IMR-90 (cell line): ENCODE measurements at regions of chr6 and their contacts with region 1.

Region 1: DNA sequence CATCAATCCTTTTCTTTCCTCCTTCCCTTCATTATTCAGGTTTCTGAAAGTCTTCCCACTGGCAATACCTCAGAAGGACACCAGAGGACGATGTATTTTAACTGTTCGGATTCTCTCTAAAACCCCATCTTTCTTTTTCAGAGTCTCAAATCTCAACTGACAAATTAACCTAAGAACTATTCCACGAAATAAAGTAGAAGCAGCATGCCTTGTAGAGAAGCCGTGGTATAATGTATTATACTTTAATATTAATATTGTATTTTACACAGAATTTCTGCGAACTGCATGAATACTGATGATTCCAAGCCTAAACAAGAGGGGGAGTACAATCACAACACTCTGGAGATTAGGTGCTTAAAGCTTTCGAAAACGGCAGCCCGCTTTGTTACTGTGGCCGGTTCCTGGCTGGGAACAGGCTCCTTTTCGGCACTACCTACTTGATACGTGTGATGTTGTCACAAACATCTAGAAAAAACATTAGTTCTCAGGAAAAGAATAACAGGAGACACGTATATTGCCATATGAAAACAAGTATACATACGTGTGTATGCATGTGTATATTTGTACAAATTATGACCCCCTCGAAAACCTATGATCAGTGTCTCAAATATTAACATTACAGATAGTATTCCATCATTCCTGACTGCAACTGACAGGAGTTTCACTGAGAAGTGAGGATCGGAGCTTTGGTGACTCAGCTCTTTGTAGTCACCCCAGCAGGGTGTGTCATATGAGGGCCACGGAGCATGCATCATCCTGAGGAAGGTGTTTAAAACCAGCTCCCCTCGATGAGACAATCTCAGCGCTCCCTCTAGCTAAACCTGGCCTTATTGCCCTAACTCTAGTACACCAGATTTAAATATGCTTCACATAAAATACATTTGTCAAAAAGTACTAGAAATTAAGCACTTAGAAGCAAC is 319.7 kb upstream of the TCF21 start:
- DNase-seq: peak; percentile 91
- ATAC-seq: peak; percentile 81
- H3K4me3 ChIP-seq: peak overlapping the region; percentile 29; the same call in 1 of the 2 replicates
- H3K27ac ChIP-seq: peak overlapping the region; percentile 96
- H3K4me1 ChIP-seq: peaks cover 16% of the 10 kb centered on the region
- H3K27me3 ChIP-seq: no peaks in the 10 kb centered on the region
- CTCF ChIP-seq: peak; percentile 97
- POLR2A ChIP-seq: peak; percentile 50; the same call in 1 of the 2 replicates
- RAD21 ChIP-seq: peak; percentile 96

Region 2: GRCh38 chr6:133544419-133544818 is 24.8 kb before region 1 on chr6:
- CTCF ChIA-PET with region 1: no interaction called
- POLR2A ChIA-PET with region 1: no interaction called
- dilution Hi-C with region 1: no loop called
- in situ Hi-C with region 1: no loop called
- intact Hi-C with region 1: no loop called
- DNase-seq: no peak
- ATAC-seq: no peak
- H3K4me3 ChIP-seq: no peak overlapping the region
- H3K27ac ChIP-seq: peak overlapping the region; percentile 21; the same call in 1 of the 2 replicates
- H3K4me1 ChIP-seq: peaks cover 16% of the 10 kb centered on the region
- H3K27me3 ChIP-seq: no peaks in the 10 kb centered on the region
- CTCF ChIP-seq: no peak
- POLR2A ChIP-seq: no peak
- RAD21 ChIP-seq: no peak

Region 3: DNA sequence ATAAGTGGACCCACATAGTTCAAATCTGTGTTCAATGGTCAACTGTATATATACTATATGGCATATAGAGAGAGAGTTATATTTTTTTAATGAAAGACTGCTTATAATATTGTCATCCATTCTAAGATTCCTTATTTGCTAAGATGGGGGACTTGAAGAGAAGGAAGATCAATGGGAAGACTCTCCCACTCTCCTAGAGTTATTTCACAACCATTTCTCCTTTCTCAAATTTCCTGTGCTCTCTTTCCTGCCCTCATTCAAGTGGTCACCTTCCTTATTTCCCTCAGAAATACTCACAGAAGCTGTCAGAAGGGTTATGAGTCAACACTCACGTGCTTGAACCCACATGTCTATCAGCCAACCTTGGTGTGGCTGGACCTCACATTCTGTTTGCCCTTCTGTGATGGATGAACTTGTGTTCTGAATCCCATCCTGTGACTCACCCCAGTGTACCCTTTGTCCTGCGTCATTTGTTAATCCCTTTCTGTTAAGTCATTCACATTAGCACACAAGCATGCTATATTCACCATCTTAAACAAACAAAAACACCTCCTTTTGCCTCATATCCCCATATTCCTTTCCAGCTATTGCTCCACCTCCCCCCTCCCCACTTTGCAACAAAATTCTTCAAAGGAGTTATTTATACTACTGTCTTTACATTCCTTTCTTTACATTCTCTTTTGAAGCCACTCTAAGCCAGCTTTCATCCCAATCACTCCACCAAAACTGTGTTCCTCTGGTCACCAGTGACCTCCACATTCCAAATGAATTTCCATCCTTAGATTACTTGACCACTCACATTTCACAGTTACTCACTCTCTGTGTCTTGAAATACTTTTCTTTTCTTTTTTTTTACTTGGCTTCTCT is 40.4 kb after region 1 on chr6:
- CTCF ChIA-PET with region 1: interaction called, 3 read pairs
- POLR2A ChIA-PET with region 1: no interaction called
- dilution Hi-C with region 1: no loop called
- in situ Hi-C with region 1: no loop called
- intact Hi-C with region 1: loop called (anchors 1 kb)
- DNase-seq: peak; percentile 100
- ATAC-seq: peak; percentile 81
- H3K4me3 ChIP-seq: no peak overlapping the region
- H3K27ac ChIP-seq: peak overlapping the region; percentile 98; the same call in 1 of the 2 replicates
- H3K4me1 ChIP-seq: peaks cover 30% of the 10 kb centered on the region
- H3K27me3 ChIP-seq: no peaks in the 10 kb centered on the region
- CTCF ChIP-seq: no peak
- POLR2A ChIP-seq: peak; percentile 51; the same call in 1 of the 2 replicates
- RAD21 ChIP-seq: peak; percentile 6

Region 4: GRCh38 chr6:133644892-133645619 is 75.8 kb after region 1 on chr6:
- CTCF ChIA-PET with region 1: interaction called, 17 read pairs
- POLR2A ChIA-PET with region 1: no interaction called
- dilution Hi-C with region 1: no loop called
- in situ Hi-C with region 1: no loop called
- intact Hi-C with region 1: no loop called
- DNase-seq: peak; percentile 74
- ATAC-seq: peak; percentile 75
- H3K4me3 ChIP-seq: no peak overlapping the region
- H3K27ac ChIP-seq: peak overlapping the region; percentile 90
- H3K4me1 ChIP-seq: peaks cover 16% of the 10 kb centered on the region
- H3K27me3 ChIP-seq: no peaks in the 10 kb centered on the region
- CTCF ChIP-seq: no peak
- POLR2A ChIP-seq: no peak
- RAD21 ChIP-seq: no peak

Region 5: GRCh38 chr6:133837801-133838349 is 268.6 kb after region 1 on chr6:
- CTCF ChIA-PET with region 1: interaction called, 7 read pairs
- POLR2A ChIA-PET with region 1: no interaction called
- dilution Hi-C with region 1: no loop called
- in situ Hi-C with region 1: no loop called
- intact Hi-C with region 1: loop called (anchors 1 kb)
- DNase-seq: no peak
- ATAC-seq: no peak
- H3K4me3 ChIP-seq: no peak overlapping the region
- H3K27ac ChIP-seq: no peak overlapping the region
- H3K4me1 ChIP-seq: peaks cover 8% of the 10 kb centered on the region
- H3K27me3 ChIP-seq: no peaks in the 10 kb centered on the region
- CTCF ChIP-seq: peak; percentile 30; the same call in 1 of the 2 replicates
- POLR2A ChIP-seq: no peak
- RAD21 ChIP-seq: peak; percentile 30

Region 6: DNA sequence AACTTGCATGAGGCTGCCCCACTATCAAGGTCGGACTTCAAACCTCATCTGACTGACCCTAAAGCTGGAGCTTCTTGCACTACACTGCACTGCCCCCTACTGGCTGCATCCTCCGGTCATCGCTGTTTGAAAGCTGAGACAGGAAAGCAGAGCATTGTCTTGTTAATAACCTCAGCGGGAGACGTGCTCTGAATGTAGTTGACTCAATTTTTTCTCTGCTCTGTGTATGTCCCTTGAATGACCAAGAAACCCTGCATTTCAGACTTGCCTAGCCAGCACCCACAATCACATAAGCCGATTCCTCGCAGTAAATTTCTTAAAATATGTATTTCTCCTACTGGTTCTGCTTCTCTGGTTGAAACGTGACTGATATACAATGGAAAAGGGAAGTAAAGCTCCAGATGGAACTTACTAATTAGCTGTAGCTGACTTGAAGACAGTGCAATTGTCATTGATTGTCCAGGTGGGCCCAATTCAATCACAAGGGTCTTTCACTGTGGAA is 347.5 kb after region 1 on chr6:
- CTCF ChIA-PET with region 1: interaction called, 37 read pairs
- POLR2A ChIA-PET with region 1: no interaction called
- dilution Hi-C with region 1: no loop called
- in situ Hi-C with region 1: loop called (anchors 5 kb)
- intact Hi-C with region 1: loop called (anchors 1 kb)
- DNase-seq: peak; percentile 91
- ATAC-seq: peak; percentile 88
- H3K4me3 ChIP-seq: no peak overlapping the region
- H3K27ac ChIP-seq: peak overlapping the region; percentile 30; the same call in 1 of the 2 replicates
- H3K4me1 ChIP-seq: peaks cover 6% of the 10 kb centered on the region; the same call in 1 of the 2 replicates
- H3K27me3 ChIP-seq: no peaks in the 10 kb centered on the region
- CTCF ChIP-seq: peak; percentile 94
- POLR2A ChIP-seq: peak; percentile 44; the same call in 1 of the 2 replicates
- RAD21 ChIP-seq: peak; percentile 95

Region 7: GRCh38 chr6:134097114-134097707 is 528.0 kb after region 1 on chr6:
- CTCF ChIA-PET with region 1: interaction called, 9 read pairs
- POLR2A ChIA-PET with region 1: no interaction called
- dilution Hi-C with region 1: no loop called
- in situ Hi-C with region 1: loop called (anchors 10 kb)
- intact Hi-C with region 1: loop called (anchors 1 kb)
- DNase-seq: peak; percentile 75
- ATAC-seq: peak; percentile 71
- H3K4me3 ChIP-seq: no peak overlapping the region
- H3K27ac ChIP-seq: no peak overlapping the region
- H3K4me1 ChIP-seq: no peaks in the 10 kb centered on the region
- H3K27me3 ChIP-seq: peaks cover 8% of the 10 kb centered on the region
- CTCF ChIP-seq: peak; percentile 81
- POLR2A ChIP-seq: no peak
- RAD21 ChIP-seq: peak; percentile 92